Activated T-helper 1 cell treated with anti-CD3 and anti-CD28 coated beads, Interleukin-12 subunit alpha, Interleukin-12 subunit beta, Interleukin-2, Interleukin-4 antibody, amounts not matched to agents 30 ng/mL and 10 ng/mL and 1 ng/mL, durations not matched to agents 14 hours and 24 hours and 36 hours (primary cell): ENCODE measurements at regions of chr17 and their contacts with region 1.

Region 1: DNA sequence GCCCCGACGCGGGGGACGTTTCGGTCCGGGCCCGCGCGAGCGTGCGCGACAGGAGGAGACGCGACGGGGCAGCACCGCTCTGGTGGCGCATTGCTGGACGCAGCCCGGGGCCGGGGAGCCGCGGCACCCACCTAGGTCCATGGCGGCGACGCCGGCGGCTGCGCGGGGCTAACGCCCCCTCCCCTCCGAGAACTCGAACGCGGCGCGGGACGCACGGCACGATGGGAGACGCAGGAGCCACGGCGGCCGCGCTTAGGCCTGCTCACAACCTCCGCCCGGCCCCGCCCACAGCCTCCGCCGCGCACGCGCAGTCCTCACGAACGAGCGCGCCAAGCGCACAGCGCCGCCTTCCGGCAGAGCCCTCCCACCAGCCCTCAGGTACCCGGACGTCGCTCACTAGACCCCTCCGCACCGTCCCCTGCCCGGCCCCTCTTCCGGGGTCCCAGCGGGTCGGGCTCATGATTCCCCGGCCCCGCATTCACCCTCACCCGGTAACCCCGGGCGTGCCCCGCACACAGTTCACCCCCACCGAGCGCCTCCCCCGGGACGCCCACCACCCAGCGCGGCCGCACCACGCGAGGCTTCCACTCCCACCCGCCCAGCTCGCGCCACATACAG is at the start of gene GEMIN4:
- DNase-seq: peak; percentile 98
- H3K4me3 Mint-ChIP-seq: peak within 1 kb of the TSS; percentile 97
- H3K27ac Mint-ChIP-seq: peak within 1 kb of the TSS; percentile 95
- H3K4me1 Mint-ChIP-seq: peaks cover 34% of the 10 kb centered on the region
- H3K27me3 Mint-ChIP-seq: no peaks in the 10 kb centered on the region
- total RNA-seq, gene GEMIN4: 64.6 and 68.6 TPM in 2 replicates

Region 2: DNA sequence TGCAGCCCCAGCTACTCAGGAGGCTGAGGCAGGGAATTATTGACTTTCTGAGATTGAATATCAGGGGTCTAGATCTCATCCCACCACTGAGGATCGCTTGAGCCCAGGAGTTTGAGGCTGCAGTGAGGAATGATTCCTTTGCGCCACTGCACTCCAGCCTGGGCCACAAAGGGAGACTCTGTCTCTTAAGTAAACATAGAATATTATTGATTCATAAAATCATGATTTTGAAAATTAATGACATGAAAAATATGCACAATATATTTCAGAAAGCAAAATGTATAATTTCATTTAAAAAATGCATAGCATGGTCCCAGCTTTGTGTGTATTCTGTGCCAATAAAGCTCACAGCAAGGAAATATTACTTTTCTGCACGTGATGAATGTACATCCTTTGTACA is 35.9 kb before region 1 on chr17:
- intact Hi-C with region 1: loop called (anchors 1 kb)
- DNase-seq: no peak
- H3K4me3 Mint-ChIP-seq: peak overlapping the region; percentile 26
- H3K27ac Mint-ChIP-seq: no peak overlapping the region
- H3K4me1 Mint-ChIP-seq: peaks cover 13% of the 10 kb centered on the region
- H3K27me3 Mint-ChIP-seq: peaks cover 8% of the 10 kb centered on the region

Region 3: GRCh38 chr17:740240-741017 is 11.7 kb before region 1 on chr17:
- intact Hi-C with region 1: loop called (anchors 1 kb)
- DNase-seq: peak; percentile 11
- H3K4me3 Mint-ChIP-seq: peak overlapping the region; percentile 12
- H3K27ac Mint-ChIP-seq: peak overlapping the region; percentile 64
- H3K4me1 Mint-ChIP-seq: peaks cover 15% of the 10 kb centered on the region
- H3K27me3 Mint-ChIP-seq: no peaks in the 10 kb centered on the region

Region 4: DNA sequence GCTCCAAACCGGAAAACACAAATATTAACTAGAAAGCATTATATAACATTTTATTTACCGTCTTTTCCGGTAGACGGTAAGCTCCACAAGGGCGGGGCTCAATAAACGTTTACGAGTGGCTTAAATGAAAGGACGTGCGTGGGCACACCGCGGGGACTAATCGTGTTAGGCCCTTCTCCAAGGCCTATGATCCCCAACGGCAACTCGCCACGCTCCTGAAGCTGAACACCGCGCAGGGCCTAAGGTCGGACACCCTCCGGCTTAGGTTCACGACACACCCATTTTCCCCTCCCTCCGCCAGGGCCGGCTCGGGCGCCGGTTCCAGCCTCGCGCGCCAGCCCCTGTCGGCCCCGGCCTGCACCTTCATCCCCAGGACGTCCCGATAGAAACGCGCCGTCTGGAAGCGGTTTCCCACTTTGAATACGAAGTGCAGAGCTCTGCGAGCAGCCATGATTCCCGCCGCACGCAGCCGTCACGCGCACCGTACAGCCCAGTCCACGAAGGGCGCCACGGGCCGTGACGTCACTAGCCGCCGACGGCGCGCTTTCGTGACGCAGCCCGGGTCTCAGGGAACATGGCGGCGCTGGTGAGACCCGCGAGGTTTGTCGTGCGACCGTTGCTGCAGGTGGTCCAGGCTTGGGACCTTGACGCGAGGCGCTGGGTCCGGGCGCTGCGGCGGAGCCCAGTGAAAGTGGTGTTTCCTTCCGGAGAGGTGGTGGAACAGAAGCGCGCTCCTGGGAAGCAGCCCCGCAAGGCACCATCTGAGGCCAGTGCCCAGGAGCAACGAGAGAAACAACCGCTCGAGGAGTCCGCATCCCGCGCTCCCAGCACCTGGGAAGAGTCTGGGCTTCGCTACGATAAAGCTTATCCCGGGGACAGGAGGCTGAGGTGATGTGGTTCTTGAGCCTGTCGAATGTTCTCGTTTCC is 30.0 kb after region 1 on chr17 and contains the starts of genes GLOD4 and MRM3:
- intact Hi-C with region 1: loop called (anchors 1 kb)
- DNase-seq: peak; percentile 94
- H3K4me3 Mint-ChIP-seq: peak within 1 kb of the TSS; percentile 97
- H3K27ac Mint-ChIP-seq: peak within 1 kb of the TSS; percentile 97
- H3K4me1 Mint-ChIP-seq: peaks cover 37% of the 10 kb centered on the region
- H3K27me3 Mint-ChIP-seq: no peaks in the 10 kb centered on the region
- total RNA-seq, gene GLOD4: 97.0 and 97.6 TPM in 2 replicates
- total RNA-seq, gene MRM3: 31.7 and 32.0 TPM in 2 replicates

Region 5: DNA sequence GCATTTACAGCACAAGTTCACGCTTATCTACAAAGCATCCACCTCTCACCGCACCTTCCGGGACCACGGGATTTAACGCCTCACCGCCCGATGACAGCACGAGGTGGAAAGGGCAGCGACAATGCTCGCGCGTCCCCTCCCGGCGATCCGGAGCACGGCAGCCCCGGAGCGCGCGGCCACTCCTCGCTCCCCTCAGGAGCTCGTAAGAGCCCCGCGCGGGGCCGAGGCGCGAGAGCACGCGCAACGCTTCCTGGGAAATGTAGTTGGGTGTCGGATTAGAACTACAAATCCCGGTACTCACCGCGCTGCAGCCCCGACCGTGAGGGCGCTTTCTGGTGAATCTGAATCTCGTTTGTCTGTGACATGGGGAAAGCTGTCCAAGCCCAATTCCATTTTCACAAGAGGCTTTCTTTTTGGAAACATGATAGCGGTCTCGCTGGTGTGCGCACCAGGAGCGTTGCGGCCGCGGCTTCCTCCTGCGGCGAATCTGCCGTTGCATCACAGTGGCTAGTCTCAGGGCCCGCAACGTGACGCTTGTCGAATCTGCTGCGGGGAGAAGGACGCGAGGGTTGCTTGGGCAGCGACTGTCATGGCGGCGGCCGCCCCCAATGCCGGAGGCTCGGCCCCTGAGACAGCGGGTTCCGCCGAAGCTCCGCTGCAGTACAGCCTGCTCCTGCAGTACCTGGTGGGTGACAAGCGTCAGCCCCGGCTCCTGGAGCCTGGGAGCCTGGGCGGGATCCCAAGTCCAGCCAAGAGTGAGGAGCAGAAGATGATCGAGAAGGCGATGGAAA is 244.6 kb after region 1 on chr17 and contains the start of gene TIMM22:
- intact Hi-C with region 1: loop called (anchors 1 kb)
- DNase-seq: peak; percentile 89
- H3K4me3 Mint-ChIP-seq: peak within 1 kb of the TSS; percentile 91
- H3K27ac Mint-ChIP-seq: peak within 1 kb of the TSS; percentile 96
- H3K4me1 Mint-ChIP-seq: peaks cover 25% of the 10 kb centered on the region
- H3K27me3 Mint-ChIP-seq: no peaks in the 10 kb centered on the region
- total RNA-seq, gene TIMM22: 14.6 and 17.3 TPM in 2 replicates